Activated naive CD4-positive, alpha-beta T cell treated with anti-CD3 and anti-CD28 coated beads for 36 hours (primary cell): ENCODE measurements at regions of chr5 and their contacts with region 1.

Region 1: DNA sequence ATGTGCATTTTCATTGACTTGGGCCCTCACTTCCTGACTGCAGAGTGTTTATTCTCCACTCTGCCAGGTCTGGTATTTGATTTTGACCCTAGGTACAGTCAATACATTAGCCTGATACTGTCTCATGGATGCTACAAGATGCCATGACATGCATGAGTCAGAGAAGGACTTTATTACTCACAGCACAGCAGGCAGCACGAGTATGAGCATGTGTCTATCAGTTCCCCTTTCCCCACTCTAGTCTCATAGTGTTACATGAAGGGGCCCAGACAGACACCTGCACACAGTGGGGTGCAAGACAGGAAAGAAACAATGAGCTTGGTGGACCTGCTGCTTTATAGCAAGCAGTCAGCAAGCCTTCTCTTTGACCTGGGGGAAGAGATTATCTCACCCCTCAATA is 19.6 kb downstream of the ITGA2 start:
- DNase-seq: peak; percentile 79
- H3K4me3 Mint-ChIP-seq: no peak overlapping the region
- H3K27ac Mint-ChIP-seq: peak overlapping the region; percentile 76
- H3K4me1 Mint-ChIP-seq: peaks cover 62% of the 10 kb centered on the region
- H3K27me3 Mint-ChIP-seq: peaks cover 5% of the 10 kb centered on the region

Region 2: GRCh38 chr5:52771343-52772039 is 237.3 kb before region 1 on chr5:
- CTCF ChIA-PET with region 1: no interaction called
- intact Hi-C with region 1: loop called (anchors 5 kb)
- DNase-seq: peak; percentile 63
- H3K4me3 Mint-ChIP-seq: no peak overlapping the region
- H3K27ac Mint-ChIP-seq: no peak overlapping the region
- H3K4me1 Mint-ChIP-seq: peaks cover 46% of the 10 kb centered on the region
- H3K27me3 Mint-ChIP-seq: no peaks in the 10 kb centered on the region

Region 3: DNA sequence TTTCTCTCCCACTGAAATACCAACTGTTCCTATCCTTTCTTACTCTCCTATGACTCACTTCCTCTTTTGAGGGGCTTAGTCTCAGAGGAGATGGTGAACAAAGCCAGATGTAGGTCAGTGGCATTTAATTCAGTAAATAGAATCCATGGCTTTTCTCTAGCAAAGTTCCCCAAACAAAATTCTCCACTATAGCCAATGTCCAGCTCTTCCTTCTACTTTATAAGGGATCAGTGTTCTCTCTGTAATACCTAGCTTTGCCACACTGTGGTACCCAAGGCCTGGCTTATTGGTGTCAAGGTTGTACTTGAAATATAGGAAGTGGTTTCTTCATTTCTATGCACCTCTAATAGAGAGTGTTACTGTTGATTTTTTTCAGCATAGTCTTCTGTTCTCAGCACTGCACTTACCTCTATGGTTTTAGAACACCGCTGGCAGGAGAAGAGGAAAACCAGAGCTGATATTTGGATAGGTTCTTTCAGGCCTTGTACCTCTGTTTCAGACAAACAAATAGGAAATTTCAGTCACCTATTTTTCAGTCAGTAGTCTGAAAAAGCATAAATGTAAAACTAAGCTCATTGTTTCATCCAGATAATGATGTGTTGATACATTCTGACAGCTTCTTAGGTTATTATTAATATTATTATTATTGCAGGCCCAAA is 60.2 kb before region 1 on chr5:
- CTCF ChIA-PET with region 1: interaction called, 7 read pairs
- intact Hi-C with region 1: loop called (anchors 1 kb)
- DNase-seq: peak; percentile 83
- H3K4me3 Mint-ChIP-seq: no peak overlapping the region
- H3K27ac Mint-ChIP-seq: no peak overlapping the region
- H3K4me1 Mint-ChIP-seq: peaks cover 14% of the 10 kb centered on the region
- H3K27me3 Mint-ChIP-seq: no peaks in the 10 kb centered on the region

Region 4: DNA sequence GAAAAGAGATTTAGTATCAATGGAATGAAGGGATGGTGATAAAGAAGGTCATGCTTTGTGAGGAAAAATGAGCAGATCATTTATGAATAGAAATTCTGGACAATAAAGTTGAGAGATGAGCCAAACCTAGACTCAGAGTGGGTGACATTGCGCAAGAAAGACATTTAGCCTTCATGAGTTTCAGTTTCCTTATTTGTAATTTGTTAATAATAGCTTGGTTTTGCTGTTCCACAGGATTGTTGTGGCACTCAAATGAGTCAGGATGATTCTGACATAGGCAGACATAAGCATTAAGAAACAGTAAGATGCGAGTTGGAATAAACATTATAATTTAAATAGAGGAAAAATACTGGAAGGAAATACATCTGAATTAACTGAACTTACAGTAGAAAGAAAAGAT is 15.2 kb after region 1 on chr5:
- CTCF ChIA-PET with region 1: interaction called, 6 read pairs
- intact Hi-C with region 1: loop called (anchors 1 kb)
- DNase-seq: peak; percentile 23
- H3K4me3 Mint-ChIP-seq: no peak overlapping the region
- H3K27ac Mint-ChIP-seq: no peak overlapping the region
- H3K4me1 Mint-ChIP-seq: peaks cover 7% of the 10 kb centered on the region
- H3K27me3 Mint-ChIP-seq: no peaks in the 10 kb centered on the region

Region 5: GRCh38 chr5:53041071-53041692 is 32.4 kb after region 1 on chr5:
- CTCF ChIA-PET with region 1: interaction called, 6 read pairs
- intact Hi-C with region 1: loop called (anchors 1 kb)
- DNase-seq: peak; percentile 22
- H3K4me3 Mint-ChIP-seq: no peak overlapping the region
- H3K27ac Mint-ChIP-seq: no peak overlapping the region
- H3K4me1 Mint-ChIP-seq: peaks cover 35% of the 10 kb centered on the region
- H3K27me3 Mint-ChIP-seq: peaks cover 6% of the 10 kb centered on the region

Region 6: DNA sequence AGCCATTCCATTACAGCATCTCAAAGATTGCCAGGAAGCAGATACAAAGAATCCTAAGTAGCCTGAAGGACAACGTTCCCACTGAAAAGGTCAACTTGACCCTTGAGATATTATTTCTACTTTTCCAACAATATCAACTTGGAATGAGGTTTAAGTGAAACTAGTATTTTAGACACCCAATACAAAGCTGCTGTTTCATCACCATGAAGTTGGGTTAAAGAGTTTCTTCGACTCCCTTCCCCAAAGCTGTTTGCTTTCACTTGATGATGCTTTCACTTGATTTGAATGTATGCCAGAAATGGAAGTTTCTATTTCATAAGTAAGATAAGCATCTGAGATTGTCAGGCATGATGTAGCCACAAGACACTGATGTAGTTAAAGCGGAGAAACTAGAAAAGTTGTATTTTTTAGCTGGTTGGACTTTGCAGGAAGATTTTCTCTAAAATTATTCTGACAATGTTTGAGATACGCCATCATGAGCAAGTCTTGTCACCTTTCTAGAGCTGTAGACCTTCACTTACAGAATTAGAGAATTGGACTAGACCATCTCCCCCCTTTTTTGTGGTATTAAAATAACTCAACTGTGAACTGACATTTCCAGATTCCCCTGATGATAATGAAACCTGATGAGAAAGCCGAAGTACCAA is 80.7 kb after region 1 on chr5:
- CTCF ChIA-PET with region 1: interaction called, 6 read pairs
- intact Hi-C with region 1: loop called (anchors 1 kb)
- DNase-seq: no peak
- H3K4me3 Mint-ChIP-seq: peak overlapping the region; percentile 45
- H3K27ac Mint-ChIP-seq: peak overlapping the region; percentile 61
- H3K4me1 Mint-ChIP-seq: peaks cover 32% of the 10 kb centered on the region
- H3K27me3 Mint-ChIP-seq: no peaks in the 10 kb centered on the region

Region 7: DNA sequence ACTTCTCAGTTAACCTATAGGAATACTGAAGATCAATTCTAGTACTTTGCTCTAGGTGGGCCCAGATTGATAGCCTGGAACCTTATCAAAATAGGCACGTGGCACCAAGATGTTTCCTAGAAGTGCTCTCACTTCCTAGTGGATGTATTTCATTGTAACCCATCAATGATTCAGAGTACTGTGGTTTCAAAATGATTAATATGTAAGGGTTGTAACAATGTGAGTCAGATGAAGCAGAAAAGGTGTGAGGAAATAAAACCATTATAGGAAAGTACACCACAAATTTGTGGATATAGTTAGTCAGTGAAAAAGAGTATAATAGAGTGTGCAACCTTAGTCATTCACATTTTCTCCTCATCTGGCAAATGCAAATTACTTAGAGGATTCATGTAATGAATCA is 294.4 kb after region 1 on chr5:
- CTCF ChIA-PET with region 1: no interaction called
- intact Hi-C with region 1: loop called (anchors 1 kb)
- DNase-seq: peak; percentile 22
- H3K4me3 Mint-ChIP-seq: no peak overlapping the region
- H3K27ac Mint-ChIP-seq: no peak overlapping the region
- H3K4me1 Mint-ChIP-seq: peaks cover 14% of the 10 kb centered on the region
- H3K27me3 Mint-ChIP-seq: peaks cover 18% of the 10 kb centered on the region